CD4-positive, alpha-beta T cell (primary cell): ENCODE measurements at regions of chr7 and their contacts with region 1.

Region 1: GRCh38 chr7:70113536-70113935 is 515.3 kb downstream of the AUTS2 start:
- DNase-seq: no peak
- ATAC-seq: no peak
- H3K4me3 ChIP-seq: no peak overlapping the region
- H3K4me3 Mint-ChIP-seq: no peak overlapping the region
- H3K27ac ChIP-seq: no peak overlapping the region
- H3K27ac Mint-ChIP-seq: no peak overlapping the region
- H3K4me1 ChIP-seq: no peaks in the 10 kb centered on the region
- H3K4me1 Mint-ChIP-seq: no peaks in the 10 kb centered on the region
- H3K27me3 ChIP-seq: no peaks in the 10 kb centered on the region
- H3K27me3 Mint-ChIP-seq: no peaks in the 10 kb centered on the region
- CTCF ChIP-seq: no peak

Region 2: DNA sequence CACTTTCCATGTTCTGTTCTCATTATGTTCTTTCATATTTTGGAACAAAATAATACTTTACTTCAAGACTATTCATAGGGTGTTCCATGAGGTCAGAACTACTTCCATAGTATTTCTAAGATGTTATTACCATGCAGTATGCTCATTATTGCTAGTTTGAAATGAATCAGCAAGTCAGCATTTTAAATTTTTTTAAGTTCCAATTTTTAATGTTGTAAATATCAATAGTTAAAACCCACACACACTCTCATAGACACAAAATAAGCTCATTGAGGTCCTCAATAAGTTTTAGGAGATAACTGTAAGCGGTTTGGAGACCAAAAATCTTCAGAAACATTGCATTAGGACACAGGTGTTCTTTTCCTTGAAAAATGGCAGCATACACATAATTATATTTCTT is 35.5 kb after region 1 on chr7:
- CTCF ChIA-PET with region 1: no interaction called
- POLR2A ChIA-PET with region 1: no interaction called
- intact Hi-C with region 1: loop called in 1 of 2 experiments (anchors 1 kb)
- DNase-seq: no peak
- ATAC-seq: no peak
- H3K4me3 ChIP-seq: no peak overlapping the region
- H3K4me3 Mint-ChIP-seq: no peak overlapping the region
- H3K27ac ChIP-seq: no peak overlapping the region
- H3K27ac Mint-ChIP-seq: no peak overlapping the region
- H3K4me1 ChIP-seq: no peaks in the 10 kb centered on the region
- H3K4me1 Mint-ChIP-seq: no peaks in the 10 kb centered on the region
- H3K27me3 ChIP-seq: no peaks in the 10 kb centered on the region
- H3K27me3 Mint-ChIP-seq: no peaks in the 10 kb centered on the region
- CTCF ChIP-seq: no peak

Region 3: GRCh38 chr7:70208236-70209063 is 94.9 kb after region 1 on chr7:
- CTCF ChIA-PET with region 1: no interaction called
- POLR2A ChIA-PET with region 1: no interaction called
- intact Hi-C with region 1: no loop called
- DNase-seq: peak in 1 of 14 experiments; percentile 14
- ATAC-seq: no peak
- H3K4me3 ChIP-seq: no peak overlapping the region
- H3K4me3 Mint-ChIP-seq: no peak overlapping the region
- H3K27ac ChIP-seq: no peak overlapping the region
- H3K27ac Mint-ChIP-seq: no peak overlapping the region
- H3K4me1 ChIP-seq: no peaks in the 10 kb centered on the region
- H3K4me1 Mint-ChIP-seq: no peaks in the 10 kb centered on the region
- H3K27me3 ChIP-seq: no peaks in the 10 kb centered on the region
- H3K27me3 Mint-ChIP-seq: no peaks in the 10 kb centered on the region
- CTCF ChIP-seq: no peak